CD8-positive, alpha-beta memory T cell (primary cell): ENCODE measurements at regions of chr6 and their contacts with region 1.

Region 1: DNA sequence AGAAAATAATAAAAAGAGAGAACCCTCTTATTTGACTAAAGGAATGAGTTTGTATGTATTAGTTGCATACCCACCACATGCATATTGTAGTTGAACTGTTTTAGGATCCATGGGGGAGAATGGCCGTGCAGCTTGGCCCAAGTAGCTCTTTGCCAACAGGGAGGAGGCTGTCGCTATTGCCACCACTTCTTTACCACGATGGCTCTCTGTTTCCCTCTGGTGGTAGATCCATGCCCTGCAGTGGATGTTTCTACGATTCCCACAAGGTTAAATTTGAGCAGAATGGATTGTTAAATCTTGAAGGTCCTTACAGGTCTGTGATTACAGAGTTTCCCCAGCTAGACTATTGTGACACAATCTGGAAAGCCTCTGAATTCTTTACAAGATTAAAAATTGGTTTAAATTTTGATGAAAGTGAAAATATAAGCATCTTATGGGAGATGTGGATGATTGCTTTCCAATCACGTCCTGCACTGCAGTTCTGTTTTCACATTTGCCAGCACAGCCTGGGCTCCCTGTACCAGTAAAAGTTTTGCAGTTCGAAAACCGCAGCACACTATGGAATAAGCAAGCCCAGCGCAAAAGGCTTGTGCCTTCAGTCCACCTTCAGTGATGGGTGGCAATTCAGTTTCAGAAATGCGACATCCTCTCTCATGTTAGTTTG is 34.4 kb upstream of the FNDC1 start:
- DNase-seq: peak; percentile 57 to 77 (median 67)
- H3K4me3 ChIP-seq: no peak overlapping the region
- H3K4me3 Mint-ChIP-seq: no peak overlapping the region
- H3K27ac ChIP-seq: no peak overlapping the region
- H3K27ac Mint-ChIP-seq: no peak overlapping the region
- H3K4me1 ChIP-seq: no peaks in the 10 kb centered on the region
- H3K4me1 Mint-ChIP-seq: peaks cover 0 to 8% (median 6%) of the 10 kb centered on the region in 3 donors
- H3K27me3 ChIP-seq: no peaks in the 10 kb centered on the region
- H3K27me3 Mint-ChIP-seq: peaks cover 15 to 21% of the 10 kb centered on the region in 2 donors

Region 2: GRCh38 chr6:158999666-159000403 is 135.0 kb before region 1 on chr6 and contains the start of gene RSPH3:
- CTCF ChIA-PET with region 1: interaction called, 261 read pairs
- POLR2A ChIA-PET with region 1: no interaction called
- DNase-seq: peak; percentile 84 to 91 (median 84)
- H3K4me3 ChIP-seq: peak within 1 kb of the TSS; percentile 95
- H3K4me3 Mint-ChIP-seq: peak within 1 kb of the TSS; percentile 96 to 99 (median 98)
- H3K27ac ChIP-seq: peak within 1 kb of the TSS; percentile 86
- H3K27ac Mint-ChIP-seq: peak within 1 kb of the TSS; percentile 83 to 98 (median 94)
- H3K4me1 ChIP-seq: peaks cover 20% of the 10 kb centered on the region
- H3K4me1 Mint-ChIP-seq: peaks cover 30 to 47% (median 35%) of the 10 kb centered on the region in 3 donors
- H3K27me3 ChIP-seq: no peaks in the 10 kb centered on the region
- H3K27me3 Mint-ChIP-seq: no peaks in the 10 kb centered on the region
- total RNA-seq, gene RSPH3: 4.2 to 4.4 TPM

Region 3: GRCh38 chr6:159017757-159018559 is 116.9 kb before region 1 on chr6:
- CTCF ChIA-PET with region 1: interaction called, 28 read pairs
- POLR2A ChIA-PET with region 1: no interaction called
- DNase-seq: no peak
- H3K4me3 ChIP-seq: no peak overlapping the region
- H3K4me3 Mint-ChIP-seq: peak overlapping the region in 6 of 7 donors; percentile 20 to 69 (median 38)
- H3K27ac ChIP-seq: no peak overlapping the region
- H3K27ac Mint-ChIP-seq: peak overlapping the region; percentile 23 to 91 (median 70)
- H3K4me1 ChIP-seq: peaks cover 39% of the 10 kb centered on the region
- H3K4me1 Mint-ChIP-seq: peaks cover 48 to 67% (median 58%) of the 10 kb centered on the region in 3 donors
- H3K27me3 ChIP-seq: no peaks in the 10 kb centered on the region
- H3K27me3 Mint-ChIP-seq: no peaks in the 10 kb centered on the region

Region 4: DNA sequence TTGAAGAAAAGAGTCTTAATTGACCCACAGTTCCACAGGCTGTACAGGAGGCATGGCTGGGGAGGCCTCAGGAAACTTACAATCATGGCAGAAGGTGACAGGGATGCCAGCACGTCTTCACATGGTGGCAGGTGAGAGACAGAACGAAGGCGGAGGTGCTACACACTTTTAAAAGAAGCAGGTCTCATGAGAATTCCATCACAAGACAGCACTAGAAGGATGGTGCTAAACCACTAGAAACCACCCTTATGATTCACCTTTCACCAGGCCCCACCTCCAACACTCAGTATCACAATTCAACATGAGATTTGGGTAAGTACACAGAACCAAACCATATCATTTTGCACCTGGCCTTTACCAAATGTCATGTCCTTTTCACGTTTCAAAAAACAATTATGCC is 110.9 kb before region 1 on chr6:
- CTCF ChIA-PET with region 1: interaction called, 28 read pairs
- POLR2A ChIA-PET with region 1: no interaction called
- DNase-seq: no peak
- H3K4me3 ChIP-seq: no peak overlapping the region
- H3K4me3 Mint-ChIP-seq: no peak overlapping the region
- H3K27ac ChIP-seq: no peak overlapping the region
- H3K27ac Mint-ChIP-seq: peak overlapping the region; percentile 51 to 94 (median 70)
- H3K4me1 ChIP-seq: peaks cover 2% of the 10 kb centered on the region
- H3K4me1 Mint-ChIP-seq: peaks cover 13 to 19% (median 14%) of the 10 kb centered on the region in 3 donors
- H3K27me3 ChIP-seq: no peaks in the 10 kb centered on the region
- H3K27me3 Mint-ChIP-seq: no peaks in the 10 kb centered on the region

Region 5: DNA sequence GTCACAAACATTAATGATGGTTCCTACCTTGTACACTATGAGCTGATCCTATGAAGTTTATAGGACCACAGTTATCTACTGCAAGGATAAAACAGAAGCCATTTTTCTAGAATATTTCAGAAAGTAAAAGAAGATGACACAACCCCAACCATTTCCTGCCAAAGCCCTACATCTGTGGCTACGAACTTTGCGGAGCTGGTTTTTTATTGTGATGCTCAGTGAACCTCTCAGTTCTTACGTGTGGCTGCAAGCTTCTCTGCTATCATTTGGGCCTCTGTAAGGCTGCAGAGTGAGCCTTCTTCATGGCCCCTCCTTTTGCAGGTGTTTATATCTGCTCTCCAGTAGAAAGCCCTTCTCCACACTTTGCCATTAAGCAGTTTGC is 72.3 kb before region 1 on chr6:
- CTCF ChIA-PET with region 1: interaction called, 15 read pairs
- POLR2A ChIA-PET with region 1: interaction called, 3 read pairs
- DNase-seq: peak; percentile 25 to 83 (median 80)
- H3K4me3 ChIP-seq: peak overlapping the region; percentile 3
- H3K4me3 Mint-ChIP-seq: peak overlapping the region; percentile 43 to 89 (median 75)
- H3K27ac ChIP-seq: peak overlapping the region; percentile 70
- H3K27ac Mint-ChIP-seq: peak overlapping the region; percentile 94 to 99 (median 98)
- H3K4me1 ChIP-seq: peaks cover 69% of the 10 kb centered on the region
- H3K4me1 Mint-ChIP-seq: peaks cover 85 to 98% (median 97%) of the 10 kb centered on the region in 3 donors
- H3K27me3 ChIP-seq: no peaks in the 10 kb centered on the region
- H3K27me3 Mint-ChIP-seq: no peaks in the 10 kb centered on the region